ENCODE measurements at regions of chr10 and their contacts with region 1.

Region 1: GRCh38 chr10:77501152-77501845 is 136.3 kb downstream of the KCNMA1 start:
- DNase-seq: peak; percentile 39
- H3K4me3 Mint-ChIP-seq: no peak overlapping the region
- H3K27ac Mint-ChIP-seq: no peak overlapping the region
- H3K4me1 Mint-ChIP-seq: peaks cover 30% of the 10 kb centered on the region
- H3K27me3 Mint-ChIP-seq: no peaks in the 10 kb centered on the region
- CTCF ChIP-seq: no peak

Region 2: DNA sequence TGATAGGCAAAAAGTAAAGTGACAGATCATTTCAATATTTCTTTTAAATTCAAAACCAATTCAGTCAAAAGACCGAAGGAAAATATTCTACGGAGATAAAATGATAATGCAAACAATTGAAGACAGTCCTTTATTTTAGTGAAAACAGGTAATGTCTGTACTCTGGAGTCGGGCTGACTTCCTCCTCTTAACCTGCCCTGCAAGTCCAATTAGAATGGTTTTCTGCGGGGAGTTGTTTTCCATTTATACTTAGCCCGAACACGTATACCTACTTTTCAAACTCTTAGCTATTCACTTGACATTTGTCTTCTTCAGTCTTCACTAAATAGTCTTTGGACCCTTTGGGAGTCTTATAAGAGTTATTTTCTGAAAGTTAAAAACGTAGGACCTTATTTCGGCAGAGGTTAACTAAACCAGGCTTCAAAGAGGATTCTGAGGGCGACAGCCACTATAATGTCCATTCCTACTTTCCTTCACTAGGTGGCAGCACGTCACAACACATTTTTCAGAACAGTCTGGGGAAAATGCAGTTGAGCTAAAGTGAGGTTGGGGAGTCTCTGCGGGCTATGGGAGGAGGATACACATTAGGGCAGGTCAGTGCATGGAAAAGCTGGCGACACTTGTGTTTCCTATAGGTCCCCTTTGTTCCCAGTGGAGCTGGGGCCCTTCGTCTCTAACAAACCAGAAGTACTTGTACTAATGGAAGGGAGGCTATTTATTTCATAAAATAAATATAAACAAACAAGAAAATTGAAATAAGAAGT is 335.7 kb before region 1 on chr10:
- CTCF ChIA-PET with region 1: no interaction called
- POLR2A ChIA-PET with region 1: no interaction called
- intact Hi-C with region 1: loop called (anchors 2 kb)
- DNase-seq: peak; percentile 79
- H3K4me3 Mint-ChIP-seq: no peak overlapping the region
- H3K27ac Mint-ChIP-seq: peak overlapping the region; percentile 81
- H3K4me1 Mint-ChIP-seq: peaks cover 37% of the 10 kb centered on the region
- H3K27me3 Mint-ChIP-seq: no peaks in the 10 kb centered on the region
- CTCF ChIP-seq: peak; percentile 77

Region 3: GRCh38 chr10:77251297-77252013 is 249.8 kb before region 1 on chr10:
- CTCF ChIA-PET with region 1: no interaction called
- POLR2A ChIA-PET with region 1: no interaction called
- intact Hi-C with region 1: loop called (anchors 10 kb)
- DNase-seq: peak; percentile 50
- H3K4me3 Mint-ChIP-seq: no peak overlapping the region
- H3K27ac Mint-ChIP-seq: no peak overlapping the region
- H3K4me1 Mint-ChIP-seq: peaks cover 13% of the 10 kb centered on the region
- H3K27me3 Mint-ChIP-seq: no peaks in the 10 kb centered on the region
- CTCF ChIP-seq: peak; percentile 86

Region 4: DNA sequence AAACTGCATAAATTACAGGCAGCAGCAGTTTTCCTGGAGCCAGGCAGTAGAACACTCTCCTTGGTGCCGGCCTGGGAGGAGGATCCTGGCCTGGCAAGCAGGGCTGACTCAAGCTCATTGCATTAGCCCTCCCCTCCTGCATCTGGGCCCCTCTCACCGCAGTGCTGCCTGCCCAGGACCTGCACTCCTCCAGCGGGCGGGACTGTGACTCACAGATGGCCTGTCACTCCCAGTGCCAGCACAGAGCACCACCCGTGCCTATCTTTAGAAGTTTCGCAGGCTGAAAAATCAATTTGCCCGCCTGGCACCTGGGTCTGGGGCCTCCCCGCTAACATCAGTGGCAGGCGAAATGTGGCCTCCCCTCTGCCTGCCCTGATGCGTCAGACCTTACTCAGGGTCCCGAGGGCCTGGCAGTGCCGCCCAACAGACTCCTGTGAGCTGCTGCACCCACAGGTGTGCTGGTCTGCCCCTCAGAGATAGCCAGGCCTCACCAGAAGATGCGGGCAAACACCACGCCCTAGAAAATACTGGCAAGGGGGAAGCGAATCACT is 12.6 kb after region 1 on chr10:
- CTCF ChIA-PET with region 1: interaction called, 10 read pairs
- POLR2A ChIA-PET with region 1: interaction called, 6 read pairs
- intact Hi-C with region 1: no loop called
- DNase-seq: peak; percentile 79
- H3K4me3 Mint-ChIP-seq: no peak overlapping the region
- H3K27ac Mint-ChIP-seq: peak overlapping the region; percentile 23
- H3K4me1 Mint-ChIP-seq: peaks cover 32% of the 10 kb centered on the region
- H3K27me3 Mint-ChIP-seq: no peaks in the 10 kb centered on the region
- CTCF ChIP-seq: no peak

Region 5: GRCh38 chr10:77592946-77593636 is 91.8 kb after region 1 on chr10:
- CTCF ChIA-PET with region 1: no interaction called
- POLR2A ChIA-PET with region 1: no interaction called
- intact Hi-C with region 1: loop called (anchors 2 kb)
- DNase-seq: peak; percentile 86
- H3K4me3 Mint-ChIP-seq: no peak overlapping the region
- H3K27ac Mint-ChIP-seq: peak overlapping the region; percentile 92
- H3K4me1 Mint-ChIP-seq: peaks cover 24% of the 10 kb centered on the region
- H3K27me3 Mint-ChIP-seq: no peaks in the 10 kb centered on the region
- CTCF ChIP-seq: no peak

Region 6: DNA sequence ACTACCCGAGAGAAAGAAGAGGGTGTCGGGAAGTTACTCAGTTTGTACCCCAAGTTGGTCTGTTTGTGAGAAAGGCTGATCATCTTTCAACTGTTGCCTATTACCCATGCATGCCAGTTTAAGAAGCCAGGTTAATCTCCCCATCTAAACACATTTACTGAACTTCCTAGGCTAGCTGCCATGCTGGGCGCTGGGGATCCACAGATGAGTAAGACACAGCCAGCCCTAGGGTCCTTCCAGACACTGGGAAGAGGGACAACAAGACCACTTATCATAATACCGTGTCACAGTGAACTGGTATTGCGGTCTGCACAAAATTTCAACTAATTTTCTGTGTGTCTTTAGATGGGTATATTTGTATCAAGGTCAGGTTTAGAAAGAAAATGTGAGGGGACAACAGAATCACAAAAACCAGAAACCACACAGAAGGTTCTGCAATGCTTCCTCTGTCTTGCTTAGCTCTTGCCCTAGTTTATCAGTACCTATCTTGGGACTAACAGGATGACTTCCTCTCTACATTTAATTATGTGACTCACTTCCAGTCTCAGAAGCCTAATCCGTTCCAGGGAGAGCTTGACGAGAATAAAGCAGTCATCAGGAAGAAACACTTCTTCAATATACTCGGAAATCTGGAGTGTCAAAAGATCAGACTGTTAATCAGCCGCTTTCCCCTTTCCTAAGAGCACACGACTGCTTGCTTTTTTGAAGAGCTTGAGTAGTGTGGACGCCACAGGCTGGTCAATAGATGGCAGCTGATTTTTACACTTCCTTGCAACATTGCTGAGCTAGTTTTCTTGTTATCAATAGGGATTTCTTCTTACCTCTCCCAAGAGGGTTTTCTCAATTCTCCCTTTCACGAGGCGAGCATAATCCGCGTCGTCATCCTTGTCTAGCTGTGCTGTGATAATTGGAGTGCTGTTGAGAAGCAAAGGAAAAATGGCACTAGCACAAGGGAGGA is 482.4 kb after region 1 on chr10:
- CTCF ChIA-PET with region 1: no interaction called
- POLR2A ChIA-PET with region 1: no interaction called
- intact Hi-C with region 1: no loop called
- DNase-seq: no peak
- H3K4me3 Mint-ChIP-seq: no peak overlapping the region
- H3K27ac Mint-ChIP-seq: no peak overlapping the region
- H3K4me1 Mint-ChIP-seq: no peaks in the 10 kb centered on the region
- H3K27me3 Mint-ChIP-seq: no peaks in the 10 kb centered on the region
- CTCF ChIP-seq: no peak